ENCODE measurements at regions of chr6 and their contacts with region 1.

Region 1: DNA sequence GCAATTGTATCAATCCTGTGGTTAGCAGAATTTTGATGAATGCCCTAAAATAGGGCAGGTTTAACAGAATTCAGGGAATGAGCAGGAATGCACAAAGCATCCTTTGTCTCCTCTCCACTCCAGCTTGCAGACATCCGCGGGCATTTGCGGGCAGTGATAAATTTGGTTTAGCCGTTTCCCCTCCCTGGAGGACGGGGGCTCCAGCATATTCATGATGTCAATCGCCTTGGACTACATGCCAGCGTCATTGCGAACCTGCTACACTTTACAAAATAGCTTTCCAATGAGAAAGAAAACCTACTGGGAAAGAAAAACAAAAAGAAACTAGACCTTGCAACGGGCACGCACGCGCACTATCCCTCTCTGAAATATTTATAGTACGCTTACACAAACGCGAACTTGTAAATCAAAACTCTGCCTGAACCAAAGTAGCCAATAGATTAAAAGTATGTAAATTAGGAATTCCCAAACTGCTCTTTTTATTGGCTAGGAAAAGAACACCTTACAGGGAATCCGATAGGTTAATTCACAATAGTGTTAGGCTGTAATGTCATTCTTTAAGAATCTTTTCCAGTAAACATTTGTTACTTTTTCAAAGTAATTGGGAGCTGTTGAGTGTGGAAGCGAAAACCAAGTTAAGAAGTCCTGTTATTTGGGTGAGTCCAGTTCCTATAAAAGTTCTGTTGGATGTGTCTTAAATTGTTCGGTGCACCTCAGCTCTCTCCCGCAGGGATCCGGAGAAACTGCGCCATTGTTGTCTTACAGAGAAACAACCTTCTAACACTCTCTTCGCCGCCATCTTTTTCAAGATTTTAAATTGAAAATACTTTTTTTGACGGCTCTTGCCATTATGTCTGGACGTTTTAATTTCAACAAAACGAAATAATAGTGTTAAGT is 136.7 kb downstream of the HFE start:
- DNase-seq: no peak
- H3K4me3 ChIP-seq: peak overlapping the region; percentile 69
- CTCF ChIP-seq: no peak

Region 2: DNA sequence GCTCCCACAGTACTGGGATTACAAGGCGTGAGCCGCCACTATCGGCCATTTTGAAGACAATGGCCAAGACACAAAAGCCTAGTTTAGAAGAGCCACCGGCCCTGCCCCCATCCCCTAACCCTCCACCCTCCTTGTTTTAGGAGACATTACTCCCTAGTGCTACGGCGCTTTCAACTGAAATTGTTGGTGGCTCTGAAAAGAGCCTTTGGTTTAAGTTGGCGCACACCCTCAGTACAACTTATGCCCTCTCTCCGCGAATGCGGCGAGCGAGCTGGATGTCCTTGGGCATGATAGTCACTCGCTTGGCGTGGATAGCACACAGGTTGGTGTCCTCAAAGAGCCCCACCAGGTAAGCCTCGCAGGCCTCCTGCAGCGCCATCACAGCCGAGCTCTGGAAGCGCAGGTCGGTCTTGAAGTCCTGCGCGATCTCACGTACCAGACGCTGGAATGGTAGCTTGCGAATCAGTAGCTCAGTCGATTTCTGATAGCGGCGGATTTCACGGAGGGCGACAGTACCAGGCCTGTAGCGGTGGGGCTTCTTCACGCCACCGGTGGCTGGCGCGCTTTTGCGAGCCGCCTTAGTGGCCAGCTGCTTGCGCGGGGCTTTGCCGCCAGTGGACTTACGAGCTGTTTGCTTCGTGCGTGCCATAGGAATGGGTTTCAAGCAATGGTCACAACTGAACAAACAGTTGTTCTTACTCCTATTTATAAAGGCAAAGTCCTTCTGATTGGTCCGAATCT is 26.2 kb after region 1 on chr6:
- CTCF ChIA-PET with region 1: interaction called, 3 read pairs
- POLR2A ChIA-PET with region 1: interaction called, 29 read pairs
- DNase-seq: no peak
- H3K4me3 ChIP-seq: peak overlapping the region; percentile 68
- CTCF ChIP-seq: peak; percentile 45